Activated naive CD4-positive, alpha-beta T cell treated with anti-CD3 and anti-CD28 coated beads for 36 hours (primary cell): ENCODE measurements at regions of chr21 and their contacts with region 1.

Region 1: DNA sequence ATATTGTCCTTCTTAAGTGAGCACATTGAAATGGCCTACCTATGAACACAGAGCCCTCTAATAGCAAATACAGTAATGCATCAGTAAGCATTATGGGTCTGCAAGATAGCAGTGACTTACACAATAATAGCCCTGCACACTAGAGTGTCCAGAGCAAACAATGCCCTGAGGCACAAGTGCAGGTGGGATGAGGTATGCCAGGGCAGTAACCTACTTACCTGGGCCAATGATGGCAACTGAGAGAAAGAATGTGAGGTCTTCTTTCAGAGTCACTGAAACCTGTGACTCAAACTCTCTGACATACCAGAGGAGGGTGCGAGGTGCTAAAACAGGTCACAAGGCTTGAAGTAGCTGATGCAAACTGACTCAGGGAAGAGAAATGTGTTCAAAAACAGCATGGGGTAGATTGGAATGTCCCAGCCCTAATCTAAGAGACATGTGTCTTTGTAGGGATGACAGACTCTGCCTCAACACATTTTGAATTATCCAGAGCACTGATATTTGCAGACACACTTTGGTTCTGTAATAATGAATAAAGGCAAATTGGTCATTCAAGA is 168.5 kb upstream of the RUNX1 start:
- DNase-seq: peak; percentile 82
- H3K4me3 Mint-ChIP-seq: no peak overlapping the region
- H3K27ac Mint-ChIP-seq: peak overlapping the region; percentile 82
- H3K4me1 Mint-ChIP-seq: peaks cover 32% of the 10 kb centered on the region
- H3K27me3 Mint-ChIP-seq: no peaks in the 10 kb centered on the region

Region 2: GRCh38 chr21:35020902-35021301 is 196.7 kb before region 1 on chr21:
- CTCF ChIA-PET with region 1: no interaction called
- intact Hi-C with region 1: no loop called
- DNase-seq: peak; percentile 52
- H3K4me3 Mint-ChIP-seq: no peak overlapping the region
- H3K27ac Mint-ChIP-seq: peak overlapping the region; percentile 80
- H3K4me1 Mint-ChIP-seq: peaks cover 89% of the 10 kb centered on the region
- H3K27me3 Mint-ChIP-seq: no peaks in the 10 kb centered on the region

Region 3: DNA sequence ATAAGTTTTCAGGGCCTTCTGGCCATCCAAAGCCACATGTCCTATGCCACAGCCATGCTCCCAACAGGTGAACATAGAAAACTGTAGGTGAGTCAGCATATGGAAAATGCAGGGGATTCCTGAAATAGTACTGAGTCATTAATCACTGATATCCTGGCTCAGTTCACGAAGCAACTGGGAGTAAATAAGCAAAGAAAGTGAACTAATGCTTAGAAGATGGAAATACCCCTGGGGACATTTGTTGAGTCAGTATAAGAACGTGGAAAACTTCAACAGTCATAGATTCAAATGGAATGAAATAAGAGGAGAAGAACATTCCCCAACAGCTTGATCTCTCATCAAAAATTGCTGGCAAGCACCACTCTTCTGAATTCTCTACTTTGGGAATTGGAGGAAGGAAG is 19.6 kb before region 1 on chr21:
- CTCF ChIA-PET with region 1: no interaction called
- intact Hi-C with region 1: loop called (anchors 2 kb)
- DNase-seq: no peak
- H3K4me3 Mint-ChIP-seq: no peak overlapping the region
- H3K27ac Mint-ChIP-seq: peak overlapping the region; percentile 32
- H3K4me1 Mint-ChIP-seq: peaks cover 41% of the 10 kb centered on the region
- H3K27me3 Mint-ChIP-seq: no peaks in the 10 kb centered on the region